Mammary epithelial cell (primary cell): ENCODE measurements at regions of chr1 and their contacts with region 1.

Region 1: GRCh38 chr1:86271046-86271445 is 114.5 kb upstream of the COL24A1 start:
- DNase-seq: no peak
- H3K4me3 ChIP-seq: no peak overlapping the region
- H3K27ac ChIP-seq: no peak overlapping the region
- H3K4me1 ChIP-seq: no peaks in the 10 kb centered on the region
- H3K27me3 ChIP-seq: no peaks in the 10 kb centered on the region
- CTCF ChIP-seq: no peak

Region 2: DNA sequence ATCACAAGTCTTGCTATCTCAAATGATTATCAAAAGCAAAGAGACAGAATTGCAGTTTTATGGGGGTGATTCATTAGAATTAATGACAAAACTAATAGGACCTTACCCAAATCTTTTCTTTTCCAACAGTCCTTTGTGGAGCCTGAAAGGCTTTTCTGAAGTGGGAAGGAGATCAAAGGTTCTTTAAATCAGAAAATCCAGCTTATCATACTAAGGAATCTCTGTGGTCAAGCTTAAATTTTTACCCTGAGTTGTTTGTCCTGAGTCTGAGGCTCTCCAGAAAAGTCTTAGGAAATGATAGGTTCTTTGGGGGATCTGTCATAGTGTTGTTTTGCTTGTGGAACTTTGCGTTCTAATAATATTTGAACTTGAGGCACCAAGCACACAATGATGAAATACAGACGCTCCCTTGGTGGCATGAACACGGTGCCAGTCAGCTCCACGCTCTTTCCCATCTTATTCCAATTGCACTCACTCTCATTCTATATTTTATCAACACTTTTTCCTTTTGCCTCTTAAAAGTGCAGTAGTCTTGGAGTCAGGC is 76.5 kb before region 1 on chr1:
- CTCF ChIA-PET with region 1: no interaction called
- dilution Hi-C with region 1: no loop called
- in situ Hi-C with region 1: no loop called
- intact Hi-C with region 1: no loop called
- DNase-seq: no peak
- H3K4me3 ChIP-seq: no peak overlapping the region
- H3K27ac ChIP-seq: no peak overlapping the region
- H3K4me1 ChIP-seq: no peaks in the 10 kb centered on the region
- H3K27me3 ChIP-seq: peaks cover 2% of the 10 kb centered on the region
- CTCF ChIP-seq: no peak

Region 3: GRCh38 chr1:86296305-86297205 is 25.5 kb after region 1 on chr1:
- CTCF ChIA-PET with region 1: no interaction called
- dilution Hi-C with region 1: no loop called
- in situ Hi-C with region 1: no loop called
- intact Hi-C with region 1: loop called (anchors 2 kb)
- DNase-seq: no peak
- H3K4me3 ChIP-seq: no peak overlapping the region
- H3K27ac ChIP-seq: no peak overlapping the region
- H3K4me1 ChIP-seq: no peaks in the 10 kb centered on the region
- H3K27me3 ChIP-seq: no peaks in the 10 kb centered on the region
- CTCF ChIP-seq: no peak